K562 (cell line): ENCODE measurements at regions of chr13 and their contacts with region 1.

Region 1: GRCh38 chr13:21176220-21176982 is at the starts of genes MRPL57 and SKA3:
- DNase-seq: peak; percentile 85 to 93 (median 88)
- ATAC-seq: peak; percentile 93
- H3K4me3 ChIP-seq: peak within 1 kb of the TSS; percentile 83
- H3K27ac ChIP-seq: peak within 1 kb of the TSS; percentile 94
- H3K4me1 ChIP-seq: peaks cover 6 to 8% of the 10 kb centered on the region in 2 experiments; a peak in 3 of 5 replicates
- H3K27me3 ChIP-seq: no peaks in the 10 kb centered on the region
- CTCF ChIP-seq: peak in 1 of 3 experiments; percentile 37; a peak in 2 of 6 replicates
- EP300 ChIP-seq: no peak
- POLR2A ChIP-seq: peak; percentile 94
- RAD21 ChIP-seq: no peak
- polyA plus RNA-seq, gene MRPL57: 6.5 to 12.5 TPM
- polyA plus RNA-seq, gene SKA3: 17.7 to 25.8 TPM

Region 2: GRCh38 chr13:19772306-19772705 is 1404.1 kb before region 1 on chr13:
- CTCF ChIA-PET with region 1: no interaction called
- POLR2A ChIA-PET with region 1: no interaction called
- in situ Hi-C with region 1: no loop called
- intact Hi-C with region 1: no loop called
- DNase-seq: no peak
- ATAC-seq: no peak
- H3K4me3 ChIP-seq: no peak overlapping the region
- H3K27ac ChIP-seq: no peak overlapping the region
- H3K4me1 ChIP-seq: no peaks in the 10 kb centered on the region; a peak in 1 of 5 replicates
- H3K27me3 ChIP-seq: no peaks in the 10 kb centered on the region
- CTCF ChIP-seq: no peak
- EP300 ChIP-seq: no peak
- POLR2A ChIP-seq: no peak
- RAD21 ChIP-seq: no peak

Region 3: DNA sequence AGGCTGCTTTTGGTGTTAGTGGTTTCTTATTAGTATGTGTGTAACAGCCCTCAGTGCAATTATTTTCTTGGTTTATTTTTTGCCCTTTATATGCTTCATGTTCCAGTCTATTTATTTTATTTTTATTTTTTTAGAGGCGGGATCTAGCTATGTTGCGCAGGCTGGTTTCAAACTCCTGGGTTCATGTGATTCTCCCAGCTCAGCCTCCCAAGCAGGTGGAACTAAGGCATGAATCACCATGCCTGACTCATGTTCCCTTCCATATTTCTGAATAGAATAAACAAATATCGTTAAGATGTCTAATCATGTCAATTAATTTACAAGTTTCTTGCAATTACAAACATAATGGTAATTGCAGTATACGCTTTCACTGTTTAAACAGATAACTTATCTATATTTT is 11.8 kb before region 1 on chr13:
- CTCF ChIA-PET with region 1: no interaction called
- POLR2A ChIA-PET with region 1: interaction called, 20 read pairs
- in situ Hi-C with region 1: no loop called
- intact Hi-C with region 1: no loop called
- DNase-seq: no peak
- ATAC-seq: no peak
- H3K4me3 ChIP-seq: no peak overlapping the region
- H3K27ac ChIP-seq: no peak overlapping the region
- H3K4me1 ChIP-seq: no peaks in the 10 kb centered on the region
- H3K27me3 ChIP-seq: no peaks in the 10 kb centered on the region
- CTCF ChIP-seq: no peak
- EP300 ChIP-seq: no peak
- POLR2A ChIP-seq: no peak
- RAD21 ChIP-seq: no peak